B cell (primary cell): ENCODE measurements at regions of chr10 and their contacts with region 1.

Region 1: DNA sequence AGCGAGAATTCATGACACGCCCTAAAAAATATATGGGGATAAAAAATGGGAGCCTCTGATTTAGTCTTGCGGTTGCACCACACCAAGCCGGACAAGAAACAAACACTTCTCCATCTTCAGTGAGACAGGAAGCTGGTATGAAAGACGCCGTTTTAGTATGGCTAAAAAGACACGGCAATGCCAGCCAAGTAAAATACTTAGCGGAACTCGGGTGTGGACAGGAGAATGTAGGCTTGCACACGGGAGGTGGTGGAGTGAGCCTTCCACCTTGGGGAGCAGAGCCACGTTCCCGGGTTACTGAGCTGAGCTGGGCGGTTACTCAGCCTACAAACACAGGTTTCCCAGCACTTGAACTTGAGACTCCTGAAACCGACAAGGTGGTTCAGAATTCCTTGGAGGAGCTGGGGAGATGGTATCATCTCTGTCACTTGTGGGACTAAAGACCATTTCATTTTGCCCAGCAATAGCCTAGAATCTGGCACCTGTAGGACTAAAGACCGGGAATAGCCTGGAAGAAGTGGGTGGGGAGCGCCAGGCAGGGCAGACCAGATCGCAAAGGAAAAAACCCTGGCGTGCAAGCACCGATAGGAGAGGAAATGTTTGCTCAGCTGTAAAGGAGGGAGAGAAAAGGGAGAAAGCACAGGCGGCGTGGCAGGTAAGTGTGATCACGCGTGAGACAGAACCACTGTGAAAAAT is 34.8 kb upstream of the SEPHS1 start:
- DNase-seq: peak; percentile 19
- ATAC-seq: no peak
- H3K4me3 ChIP-seq: peak overlapping the region in 3 of 5 experiments; percentile 4 to 51 (median 21)
- H3K4me3 Mint-ChIP-seq: peak overlapping the region; percentile 78
- H3K27ac ChIP-seq: no peak overlapping the region
- H3K27ac Mint-ChIP-seq: no peak overlapping the region
- H3K4me1 ChIP-seq: peaks cover 11 to 14% of the 10 kb centered on the region in 2 donors
- H3K4me1 Mint-ChIP-seq: peaks cover 13% of the 10 kb centered on the region
- H3K27me3 ChIP-seq: peaks cover 0 to 30% (median 13%) of the 10 kb centered on the region in 4 experiments
- H3K27me3 Mint-ChIP-seq: peaks cover 51% of the 10 kb centered on the region
- CTCF ChIP-seq: no peak

Region 2: GRCh38 chr10:13299437-13300287 is 83.2 kb before region 1 on chr10 and contains the start of gene PHYH:
- CTCF ChIA-PET with region 1: no interaction called
- POLR2A ChIA-PET with region 1: no interaction called
- intact Hi-C with region 1: no loop called
- DNase-seq: peak; percentile 88
- ATAC-seq: peak; percentile 71
- H3K4me3 ChIP-seq: peak within 1 kb of the TSS in 4 of 5 experiments; percentile 59 to 68 (median 66)
- H3K4me3 Mint-ChIP-seq: peak within 1 kb of the TSS; percentile 88
- H3K27ac ChIP-seq: peak within 1 kb of the TSS; percentile 66 to 71
- H3K27ac Mint-ChIP-seq: peak within 1 kb of the TSS; percentile 83
- H3K4me1 ChIP-seq: peaks cover 9 to 25% of the 10 kb centered on the region in 2 donors
- H3K4me1 Mint-ChIP-seq: peaks cover 20% of the 10 kb centered on the region
- H3K27me3 ChIP-seq: no peaks in the 10 kb centered on the region
- H3K27me3 Mint-ChIP-seq: no peaks in the 10 kb centered on the region
- CTCF ChIP-seq: no peak
- total RNA-seq, gene PHYH: 9.7 and 14.9 TPM in 2 replicates

Region 3: DNA sequence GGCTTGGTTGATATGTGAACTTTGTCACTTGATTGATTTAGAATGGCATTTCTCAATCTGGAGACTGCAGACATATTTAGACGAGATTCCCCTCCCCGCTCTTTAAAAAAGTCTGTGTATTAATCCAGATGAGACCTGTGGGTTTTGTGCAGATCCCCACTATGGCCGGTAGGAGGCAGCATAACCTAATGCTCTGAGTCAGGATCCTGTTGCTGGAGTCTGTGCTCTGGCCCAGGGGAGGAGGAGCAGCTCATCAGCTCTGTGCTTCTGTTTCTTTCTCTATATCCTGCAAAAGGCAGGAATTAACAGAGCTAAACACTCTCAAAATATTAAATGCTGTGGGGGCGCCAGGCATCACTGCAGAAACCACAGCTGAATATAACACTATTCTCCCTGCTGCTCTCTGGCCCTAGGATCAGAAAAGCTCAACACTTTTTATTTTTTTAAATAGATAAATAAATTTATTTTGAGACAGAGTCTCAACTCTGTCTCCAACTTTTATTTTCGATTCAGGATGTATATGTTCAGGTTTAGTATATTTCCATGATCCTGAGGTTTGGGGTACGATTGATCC is 10.9 kb before region 1 on chr10:
- CTCF ChIA-PET with region 1: interaction called, 11 read pairs
- POLR2A ChIA-PET with region 1: no interaction called
- intact Hi-C with region 1: no loop called
- DNase-seq: peak; percentile 84
- ATAC-seq: peak; percentile 96
- H3K4me3 ChIP-seq: no peak overlapping the region
- H3K4me3 Mint-ChIP-seq: no peak overlapping the region
- H3K27ac ChIP-seq: no peak overlapping the region
- H3K27ac Mint-ChIP-seq: no peak overlapping the region
- H3K4me1 ChIP-seq: no peaks in the 10 kb centered on the region
- H3K4me1 Mint-ChIP-seq: no peaks in the 10 kb centered on the region
- H3K27me3 ChIP-seq: no peaks in the 10 kb centered on the region
- H3K27me3 Mint-ChIP-seq: peaks cover 4% of the 10 kb centered on the region
- CTCF ChIP-seq: peak; percentile 95